AG04450 (cell line): ENCODE measurements at regions of chr2 and their contacts with region 1.

Region 1: GRCh38 chr2:11129598-11130449 is 25.4 kb upstream of the SLC66A3 start:
- DNase-seq: no peak
- H3K4me3 ChIP-seq: peak overlapping the region; percentile 39
- H3K27ac ChIP-seq: no peak overlapping the region
- H3K27me3 ChIP-seq: no peaks in the 10 kb centered on the region
- CTCF ChIP-seq: peak; percentile 15; the same call in 1 of the 2 replicates

Region 2: GRCh38 chr2:11073251-11073650 is 56.6 kb before region 1 on chr2:
- CTCF ChIA-PET with region 1: interaction called, 11 read pairs
- POLR2A ChIA-PET with region 1: no interaction called
- DNase-seq: no peak
- H3K4me3 ChIP-seq: no peak overlapping the region
- H3K27ac ChIP-seq: no peak overlapping the region
- H3K27me3 ChIP-seq: no peaks in the 10 kb centered on the region
- CTCF ChIP-seq: peak; percentile 58

Region 3: DNA sequence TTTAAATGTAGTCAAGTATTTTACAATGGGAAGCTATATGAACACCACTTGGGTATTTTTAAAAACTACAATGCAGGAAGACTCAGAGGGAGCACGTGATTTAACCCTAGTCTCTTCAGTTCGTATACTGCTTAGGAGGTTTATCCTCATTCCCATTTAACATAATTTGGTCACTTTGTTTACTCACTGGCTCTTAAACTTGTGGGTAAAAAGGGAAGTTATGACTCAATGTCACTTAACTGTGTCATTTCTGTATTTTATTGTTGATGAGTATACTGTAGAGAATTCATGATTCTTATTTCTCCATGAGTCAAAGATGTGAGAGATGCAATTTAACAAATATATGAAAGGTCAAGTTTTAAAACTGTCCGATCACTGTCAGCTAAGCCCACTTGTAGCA is 73.7 kb after region 1 on chr2:
- CTCF ChIA-PET with region 1: interaction called, 14 read pairs
- POLR2A ChIA-PET with region 1: no interaction called
- DNase-seq: no peak
- H3K4me3 ChIP-seq: no peak overlapping the region
- H3K27ac ChIP-seq: no peak overlapping the region
- H3K27me3 ChIP-seq: no peaks in the 10 kb centered on the region
- CTCF ChIP-seq: no peak

Region 4: DNA sequence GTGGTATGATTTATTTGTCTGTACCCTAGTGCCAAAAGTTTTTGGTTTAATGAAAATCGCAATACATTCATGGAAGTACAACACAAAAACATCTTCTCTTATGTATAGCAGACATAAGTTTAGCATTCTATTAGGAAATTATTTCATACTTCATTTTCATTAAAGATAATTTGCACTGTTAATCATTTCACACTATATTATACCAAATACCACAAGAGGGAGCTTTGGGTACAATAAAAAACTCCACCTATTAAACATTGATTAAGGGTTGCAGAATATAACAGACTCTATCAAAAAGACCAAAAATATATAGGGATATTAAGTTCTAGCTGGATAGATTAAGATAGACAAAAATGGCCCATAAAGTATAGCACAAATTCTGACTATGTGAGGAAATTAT is 104.5 kb after region 1 on chr2:
- CTCF ChIA-PET with region 1: interaction called, 16 read pairs
- POLR2A ChIA-PET with region 1: no interaction called
- DNase-seq: no peak
- H3K4me3 ChIP-seq: no peak overlapping the region
- H3K27ac ChIP-seq: no peak overlapping the region
- H3K27me3 ChIP-seq: no peaks in the 10 kb centered on the region
- CTCF ChIP-seq: peak; percentile 51

Region 5: DNA sequence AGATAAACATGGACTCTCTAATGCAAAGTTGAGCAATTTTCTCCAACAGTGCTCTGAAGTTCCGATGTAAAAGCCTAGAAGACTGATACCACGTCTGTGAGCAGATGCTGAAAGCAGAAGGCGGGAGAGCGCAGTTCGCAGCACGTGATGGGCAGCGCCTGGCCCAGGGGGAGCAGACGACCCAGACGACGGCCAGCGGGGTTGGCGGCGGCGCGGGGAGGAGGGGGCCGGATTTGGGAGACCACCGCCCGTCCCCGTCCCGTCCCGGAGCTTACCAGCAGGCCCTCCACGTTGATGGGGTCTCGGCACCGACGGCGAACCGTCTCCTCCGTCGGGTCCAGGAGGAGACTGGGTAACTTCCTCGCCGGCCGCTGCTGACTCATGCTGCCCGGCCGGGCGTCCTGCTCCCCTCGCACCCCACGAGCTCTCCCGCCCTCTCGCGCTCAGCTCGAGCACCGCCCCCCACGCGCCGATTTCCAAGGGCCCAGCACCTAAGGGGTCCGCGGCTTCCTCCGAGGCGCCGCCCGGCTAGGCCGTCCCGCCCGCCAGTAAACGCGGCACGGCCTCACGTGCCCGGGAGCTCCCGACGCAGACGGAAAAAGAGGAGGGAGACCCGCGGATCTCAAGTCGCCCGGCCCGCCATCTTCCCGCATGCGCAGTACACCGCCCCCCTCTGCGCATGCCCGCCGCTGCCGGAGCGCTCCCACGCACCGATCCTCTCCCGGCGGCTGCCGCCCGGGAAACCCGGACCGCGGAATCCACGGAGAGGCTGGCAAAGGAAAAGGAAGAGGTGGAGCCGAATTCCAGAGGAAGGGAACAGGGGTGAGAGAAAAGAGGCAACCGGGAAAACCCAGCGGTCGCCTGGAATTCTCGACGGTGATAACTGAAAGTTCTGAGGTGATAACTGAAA is 335.9 kb after region 1 on chr2 and contains the start of gene E2F6:
- CTCF ChIA-PET with region 1: interaction called, 21 read pairs
- POLR2A ChIA-PET with region 1: no interaction called
- DNase-seq: peak; percentile 81
- H3K4me3 ChIP-seq: peak within 1 kb of the TSS; percentile 72
- H3K27ac ChIP-seq: peak within 1 kb of the TSS; percentile 91
- H3K27me3 ChIP-seq: peaks cover 5% of the 10 kb centered on the region
- CTCF ChIP-seq: no peak
- polyA plus RNA-seq, gene E2F6: 12.0 and 17.9 TPM in 2 replicates

Region 6: DNA sequence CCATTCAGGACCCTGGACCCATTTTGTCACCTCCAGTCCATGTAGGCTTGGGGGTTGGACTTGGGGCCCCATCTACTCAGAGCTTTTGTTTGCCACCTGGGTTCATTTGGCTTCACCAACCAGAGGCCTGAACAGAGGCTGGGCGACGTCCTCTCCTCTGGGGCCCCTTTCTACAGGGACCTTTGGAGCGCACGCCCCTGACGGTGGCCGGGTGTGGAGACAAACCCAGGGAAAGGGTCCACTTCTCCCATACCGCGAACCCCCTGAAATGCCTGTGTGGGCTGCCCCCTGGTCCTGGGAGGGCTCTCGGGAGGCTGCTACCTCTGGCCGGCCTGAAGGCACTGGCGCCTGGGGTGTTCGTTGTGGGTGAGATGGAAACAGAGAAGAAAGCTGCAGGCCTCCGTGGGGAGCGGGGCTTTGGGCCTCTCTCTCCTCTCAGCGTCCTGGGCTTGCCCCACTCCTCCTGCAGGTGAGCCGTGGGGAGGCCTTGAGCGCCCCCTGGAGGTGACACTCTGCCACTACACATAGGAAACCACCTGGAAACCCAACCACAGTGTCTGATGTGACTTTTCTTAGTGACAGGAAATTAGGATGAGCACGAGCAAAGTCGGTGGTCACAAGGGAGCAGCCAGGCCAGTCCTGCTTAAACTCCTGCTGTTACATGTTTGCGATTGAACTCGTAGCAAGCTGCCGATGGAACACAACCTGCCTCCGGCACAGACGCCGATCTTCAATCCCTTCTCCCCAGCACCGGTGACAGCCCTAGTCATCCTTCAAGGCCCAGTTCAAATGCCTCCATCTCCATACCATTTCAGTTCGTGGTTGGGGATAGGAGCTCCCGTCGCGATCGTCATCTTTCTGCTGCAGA is 552.1 kb after region 1 on chr2:
- CTCF ChIA-PET with region 1: interaction called, 13 read pairs
- POLR2A ChIA-PET with region 1: no interaction called
- DNase-seq: no peak
- H3K4me3 ChIP-seq: no peak overlapping the region
- H3K27ac ChIP-seq: no peak overlapping the region
- H3K27me3 ChIP-seq: peaks cover 44% of the 10 kb centered on the region
- CTCF ChIP-seq: peak; percentile 83